ENCODE measurements at regions of chr5 and their contacts with region 1.

Region 1: DNA sequence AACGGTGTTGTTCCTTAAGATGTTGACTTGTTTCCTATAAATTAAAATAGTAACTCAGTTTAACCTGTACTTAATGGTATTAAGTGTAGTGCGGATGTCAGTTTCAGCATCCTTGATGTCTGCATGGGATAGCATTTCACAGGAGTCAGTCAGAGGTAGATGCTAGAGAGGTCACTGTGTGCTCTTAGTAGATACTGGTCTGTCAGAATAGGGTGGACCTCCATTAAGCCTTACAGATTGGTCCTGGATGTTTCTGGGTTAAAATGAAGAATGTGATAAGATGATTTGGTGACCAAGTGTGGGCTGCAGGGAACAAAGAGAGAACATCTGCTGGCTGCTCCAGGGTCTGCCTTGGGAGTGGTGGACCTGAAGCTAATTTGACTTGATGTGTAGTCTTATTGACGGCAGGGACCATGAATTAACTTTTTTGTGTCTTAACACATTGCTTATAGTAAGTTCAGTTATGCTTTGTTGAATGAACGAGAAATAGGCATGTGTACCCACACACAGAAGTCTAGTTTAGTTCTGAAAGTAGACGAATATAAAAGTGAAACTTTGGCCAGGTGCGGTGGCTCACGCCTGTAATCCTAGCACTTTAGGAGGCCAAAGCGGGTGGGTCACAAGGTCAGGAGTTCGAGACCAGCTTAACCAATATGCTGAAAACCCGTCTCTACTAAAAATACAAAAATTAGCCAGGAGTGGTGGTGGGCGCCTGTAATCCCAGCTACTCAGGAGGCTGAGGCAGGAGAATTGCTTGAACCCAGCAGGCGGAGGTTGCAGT is 12.5 kb downstream of the RAB24 start:
- DNase-seq: no peak
- H3K4me3 ChIP-seq: no peak overlapping the region
- H3K27ac ChIP-seq: no peak overlapping the region
- H3K4me1 ChIP-seq: no peaks in the 10 kb centered on the region
- H3K27me3 ChIP-seq: no peaks in the 10 kb centered on the region
- CTCF ChIP-seq: no peak

Region 2: DNA sequence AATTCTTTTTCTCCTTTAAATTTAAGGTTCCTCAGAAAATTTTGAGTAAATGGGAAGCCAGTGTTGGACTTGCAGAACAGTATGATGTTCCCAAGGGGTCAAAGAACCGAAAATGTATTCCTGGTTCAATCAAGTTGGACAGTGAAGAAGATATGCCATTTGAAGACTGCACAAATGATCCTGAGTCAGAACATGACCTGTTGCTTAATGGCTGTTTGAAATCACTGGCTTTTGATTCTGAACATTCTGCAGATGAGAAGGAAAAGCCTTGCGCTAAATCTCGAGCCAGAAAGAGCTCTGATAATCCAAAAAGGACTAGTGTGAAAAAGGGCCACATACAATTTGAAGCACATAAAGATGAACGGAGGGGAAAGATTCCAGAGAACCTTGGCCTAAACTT is 81.4 kb before region 1 on chr5:
- CTCF ChIA-PET with region 1: no interaction called
- dilution Hi-C with region 1: no loop called
- in situ Hi-C with region 1: no loop called
- intact Hi-C with region 1: no loop called
- DNase-seq: no peak
- H3K4me3 ChIP-seq: no peak overlapping the region
- H3K27ac ChIP-seq: no peak overlapping the region
- H3K4me1 ChIP-seq: no peaks in the 10 kb centered on the region
- H3K27me3 ChIP-seq: no peaks in the 10 kb centered on the region
- CTCF ChIP-seq: no peak

Region 3: DNA sequence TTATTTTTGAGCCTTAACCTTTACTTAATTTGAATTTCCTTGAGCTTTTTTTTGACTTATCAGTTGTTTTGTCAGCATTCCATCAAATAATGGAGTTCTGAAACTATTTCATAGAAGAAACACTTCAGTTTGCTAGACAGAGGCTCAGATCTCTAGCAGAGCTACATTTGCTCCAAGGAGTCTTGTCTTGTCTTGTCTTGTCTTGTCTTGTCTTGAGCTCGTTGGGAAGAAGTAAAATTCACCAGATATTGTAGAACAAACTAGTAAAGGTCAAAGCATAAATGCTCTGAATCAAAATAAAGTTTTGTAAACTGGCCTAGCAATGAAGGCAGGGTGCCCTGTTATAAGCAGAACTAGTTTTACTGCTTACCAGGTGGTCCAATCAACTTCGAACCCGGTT is 21.0 kb before region 1 on chr5:
- CTCF ChIA-PET with region 1: no interaction called
- dilution Hi-C with region 1: no loop called
- in situ Hi-C with region 1: no loop called
- intact Hi-C with region 1: loop called (anchors 2 kb)
- DNase-seq: peak; percentile 78
- H3K4me3 ChIP-seq: no peak overlapping the region
- H3K27ac ChIP-seq: no peak overlapping the region
- H3K4me1 ChIP-seq: peaks cover 24% of the 10 kb centered on the region
- H3K27me3 ChIP-seq: no peaks in the 10 kb centered on the region
- CTCF ChIP-seq: no peak